Heart right ventricle (tissue), 16 donors: ENCODE measurements at regions of chr4 and their contacts with region 1.

Region 1: DNA sequence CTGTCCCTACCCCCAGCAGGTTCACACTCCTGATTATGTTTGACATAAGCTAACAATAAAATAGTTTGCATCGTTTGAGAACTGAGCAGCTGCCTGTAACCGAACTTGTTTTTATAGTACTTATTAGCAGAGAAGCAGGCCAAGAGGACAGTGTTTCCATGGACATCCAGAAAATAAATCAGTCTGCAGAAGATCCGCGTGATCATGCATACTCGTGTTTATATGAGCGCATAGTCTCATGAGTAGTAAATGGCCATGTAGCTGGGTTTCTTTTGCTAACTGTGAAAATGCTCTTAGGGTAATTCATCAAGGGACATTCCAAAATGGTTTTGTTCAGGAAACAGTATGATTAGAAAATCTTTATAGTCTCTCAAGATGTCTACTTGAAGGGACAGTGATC is 289.2 kb downstream of the DCTD start:
- DNase-seq: no peak
- ATAC-seq: no peak
- H3K4me3 ChIP-seq: no peak overlapping the region
- H3K27ac ChIP-seq: no peak overlapping the region
- H3K4me1 ChIP-seq: no peaks in the 10 kb centered on the region
- H3K27me3 ChIP-seq: no peaks in the 10 kb centered on the region
- CTCF ChIP-seq: no peak

Region 2: DNA sequence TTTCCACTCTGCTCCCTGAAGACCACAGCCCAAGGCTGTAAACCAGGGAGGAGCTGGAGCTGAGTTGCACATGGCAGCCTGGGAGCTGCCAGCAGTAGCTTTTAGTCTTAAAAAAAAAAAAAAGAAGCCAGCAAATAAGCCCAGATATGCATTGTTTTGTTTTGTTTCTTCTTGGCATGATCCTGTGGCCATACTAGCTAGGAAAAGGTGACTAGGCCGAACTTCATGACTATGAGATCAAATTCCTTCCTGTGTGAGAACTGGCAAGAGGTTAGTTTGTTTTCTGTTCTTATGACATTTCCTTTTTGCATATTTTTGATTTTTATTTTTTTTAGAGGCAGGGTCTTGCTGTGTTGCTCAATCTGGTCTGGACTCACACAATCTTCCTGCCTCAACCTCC is 34.1 kb before region 1 on chr4:
- intact Hi-C with region 1: no loop called
- DNase-seq: no peak
- ATAC-seq: no peak
- H3K4me3 ChIP-seq: no peak overlapping the region
- H3K27ac ChIP-seq: no peak overlapping the region
- H3K4me1 ChIP-seq: no peaks in the 10 kb centered on the region
- H3K27me3 ChIP-seq: no peaks in the 10 kb centered on the region
- CTCF ChIP-seq: no peak

Region 3: DNA sequence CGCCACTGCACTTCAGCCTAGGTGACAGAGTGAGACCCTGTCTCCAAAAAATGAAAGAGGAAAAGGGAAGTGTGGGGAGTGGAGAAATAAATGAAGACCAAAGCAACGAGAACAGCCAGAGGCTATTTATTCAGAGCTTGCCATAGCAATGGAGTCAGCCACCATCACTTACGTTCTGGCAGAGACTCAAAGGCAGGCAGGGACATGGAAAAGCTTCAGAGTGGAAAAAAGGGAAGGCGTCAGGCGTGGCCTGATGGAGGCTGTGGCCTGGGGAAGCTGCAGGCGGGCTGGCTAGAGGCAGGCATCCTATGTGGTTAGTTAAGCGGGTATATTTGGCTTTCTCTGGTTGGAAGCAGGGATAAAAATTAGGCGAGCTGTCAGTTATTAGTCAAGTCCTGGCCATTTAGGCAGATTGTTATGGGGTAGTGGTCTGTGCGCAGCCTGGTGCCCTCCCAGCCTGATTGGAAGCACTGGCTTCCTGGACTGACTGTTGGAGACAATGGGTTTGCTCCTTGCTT is 215.9 kb after region 1 on chr4:
- intact Hi-C with region 1: loop called in 1 of 10 experiments (anchors 5 kb)
- DNase-seq: no peak
- ATAC-seq: no peak
- H3K4me3 ChIP-seq: no peak overlapping the region
- H3K27ac ChIP-seq: no peak overlapping the region
- H3K4me1 ChIP-seq: no peaks in the 10 kb centered on the region
- H3K27me3 ChIP-seq: no peaks in the 10 kb centered on the region
- CTCF ChIP-seq: no peak